ENCODE measurements at regions of chr16 and their contacts with region 1.

Region 1: GRCh38 chr16:66167564-66168291 is 198.8 kb upstream of the CDH5 start:
- DNase-seq: peak in 1 of 2 experiments; percentile 40
- H3K4me3 ChIP-seq: no peak overlapping the region
- H3K4me3 Mint-ChIP-seq: no peak overlapping the region
- H3K27ac Mint-ChIP-seq: no peak overlapping the region
- H3K4me1 ChIP-seq: peaks cover 7% of the 10 kb centered on the region; the same call in 1 of the 2 replicates
- H3K4me1 Mint-ChIP-seq: peaks cover 5% of the 10 kb centered on the region
- H3K27me3 ChIP-seq: no peaks in the 10 kb centered on the region
- H3K27me3 Mint-ChIP-seq: no peaks in the 10 kb centered on the region
- CTCF ChIP-seq: peak; percentile 20 to 40

Region 2: DNA sequence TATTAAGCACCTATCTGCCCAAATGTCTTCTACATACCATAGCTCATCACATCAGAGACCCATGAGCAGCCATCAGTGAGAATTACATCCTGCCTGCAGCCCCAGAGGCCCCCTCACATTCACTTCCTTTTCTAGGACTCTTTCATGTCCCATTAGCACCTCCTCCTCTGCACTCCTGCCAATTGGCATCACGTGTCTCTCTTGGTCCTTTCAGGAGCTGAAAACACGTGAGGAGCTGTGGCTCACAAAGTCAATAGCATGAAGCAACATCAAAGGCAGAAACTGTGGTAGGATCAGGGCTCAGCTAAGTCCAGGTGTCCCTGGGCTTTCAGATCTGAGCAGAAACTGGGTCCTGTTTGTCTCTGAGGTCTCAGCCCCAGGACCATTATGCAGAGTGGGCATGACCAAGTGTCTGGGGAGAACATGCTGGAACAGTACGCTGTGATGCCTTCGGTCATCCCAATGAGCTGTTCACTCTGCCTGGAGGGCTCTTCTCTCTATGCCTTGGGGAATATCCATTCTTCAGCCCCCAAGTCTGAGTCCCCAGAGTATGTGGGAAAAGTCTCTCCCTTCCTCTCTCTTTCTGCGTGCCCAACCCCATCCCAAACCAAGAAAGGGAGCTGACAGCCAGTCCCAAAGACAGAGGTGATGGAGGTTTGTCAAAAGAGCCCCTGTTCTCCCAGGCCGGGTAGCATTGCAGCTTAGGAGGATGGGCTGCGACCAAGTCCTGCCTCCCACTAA is 258.2 kb before region 1 on chr16:
- CTCF ChIA-PET with region 1: no interaction called
- POLR2A ChIA-PET with region 1: no interaction called
- intact Hi-C with region 1: loop called (anchors 5 kb)
- DNase-seq: no peak
- H3K4me3 ChIP-seq: no peak overlapping the region
- H3K4me3 Mint-ChIP-seq: no peak overlapping the region
- H3K27ac Mint-ChIP-seq: no peak overlapping the region
- H3K4me1 ChIP-seq: no peaks in the 10 kb centered on the region
- H3K4me1 Mint-ChIP-seq: no peaks in the 10 kb centered on the region
- H3K27me3 ChIP-seq: no peaks in the 10 kb centered on the region
- H3K27me3 Mint-ChIP-seq: peaks cover 18% of the 10 kb centered on the region
- CTCF ChIP-seq: no peak

Region 3: DNA sequence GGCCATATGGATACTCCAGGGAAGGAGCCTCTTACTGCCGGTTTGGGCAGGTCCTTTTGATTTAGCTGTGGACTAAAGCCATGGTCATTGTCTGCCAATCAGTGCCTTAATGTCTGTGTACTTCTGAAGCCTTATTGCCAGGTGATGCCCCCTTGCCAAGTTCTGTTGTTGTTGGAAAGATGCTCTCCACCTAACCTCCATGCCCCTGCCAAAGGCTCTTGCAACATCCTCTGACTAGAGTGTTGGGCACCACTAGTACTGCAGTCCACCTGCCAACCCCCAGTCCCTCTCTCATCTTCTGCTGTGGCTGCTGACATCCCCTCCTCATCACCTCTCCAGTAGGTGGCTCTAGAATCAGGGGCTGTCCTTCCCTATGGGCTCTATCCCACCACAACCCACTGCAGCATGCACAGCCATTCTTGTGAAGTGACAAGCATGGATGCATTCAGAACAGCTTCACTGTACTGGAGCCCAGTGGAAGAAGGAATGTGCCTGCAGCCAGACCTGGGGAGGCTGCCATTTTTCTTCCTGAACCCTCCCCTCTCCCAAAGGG is 176.5 kb before region 1 on chr16:
- CTCF ChIA-PET with region 1: no interaction called
- POLR2A ChIA-PET with region 1: no interaction called
- intact Hi-C with region 1: loop called (anchors 10 kb)
- DNase-seq: peak in 1 of 2 experiments; percentile 35
- H3K4me3 ChIP-seq: no peak overlapping the region
- H3K4me3 Mint-ChIP-seq: no peak overlapping the region
- H3K27ac Mint-ChIP-seq: no peak overlapping the region
- H3K4me1 ChIP-seq: no peaks in the 10 kb centered on the region
- H3K4me1 Mint-ChIP-seq: no peaks in the 10 kb centered on the region
- H3K27me3 ChIP-seq: no peaks in the 10 kb centered on the region
- H3K27me3 Mint-ChIP-seq: peaks cover 20% of the 10 kb centered on the region
- CTCF ChIP-seq: peak in 1 of 2 experiments; percentile 20

Region 4: GRCh38 chr16:66193543-66194229 is 26.0 kb after region 1 on chr16:
- CTCF ChIA-PET with region 1: no interaction called
- POLR2A ChIA-PET with region 1: no interaction called
- intact Hi-C with region 1: loop called (anchors 1 kb)
- DNase-seq: no peak
- H3K4me3 ChIP-seq: no peak overlapping the region
- H3K4me3 Mint-ChIP-seq: no peak overlapping the region
- H3K27ac Mint-ChIP-seq: no peak overlapping the region
- H3K4me1 ChIP-seq: no peaks in the 10 kb centered on the region
- H3K4me1 Mint-ChIP-seq: no peaks in the 10 kb centered on the region
- H3K27me3 ChIP-seq: no peaks in the 10 kb centered on the region
- H3K27me3 Mint-ChIP-seq: peaks cover 15% of the 10 kb centered on the region
- CTCF ChIP-seq: no peak

Region 5: DNA sequence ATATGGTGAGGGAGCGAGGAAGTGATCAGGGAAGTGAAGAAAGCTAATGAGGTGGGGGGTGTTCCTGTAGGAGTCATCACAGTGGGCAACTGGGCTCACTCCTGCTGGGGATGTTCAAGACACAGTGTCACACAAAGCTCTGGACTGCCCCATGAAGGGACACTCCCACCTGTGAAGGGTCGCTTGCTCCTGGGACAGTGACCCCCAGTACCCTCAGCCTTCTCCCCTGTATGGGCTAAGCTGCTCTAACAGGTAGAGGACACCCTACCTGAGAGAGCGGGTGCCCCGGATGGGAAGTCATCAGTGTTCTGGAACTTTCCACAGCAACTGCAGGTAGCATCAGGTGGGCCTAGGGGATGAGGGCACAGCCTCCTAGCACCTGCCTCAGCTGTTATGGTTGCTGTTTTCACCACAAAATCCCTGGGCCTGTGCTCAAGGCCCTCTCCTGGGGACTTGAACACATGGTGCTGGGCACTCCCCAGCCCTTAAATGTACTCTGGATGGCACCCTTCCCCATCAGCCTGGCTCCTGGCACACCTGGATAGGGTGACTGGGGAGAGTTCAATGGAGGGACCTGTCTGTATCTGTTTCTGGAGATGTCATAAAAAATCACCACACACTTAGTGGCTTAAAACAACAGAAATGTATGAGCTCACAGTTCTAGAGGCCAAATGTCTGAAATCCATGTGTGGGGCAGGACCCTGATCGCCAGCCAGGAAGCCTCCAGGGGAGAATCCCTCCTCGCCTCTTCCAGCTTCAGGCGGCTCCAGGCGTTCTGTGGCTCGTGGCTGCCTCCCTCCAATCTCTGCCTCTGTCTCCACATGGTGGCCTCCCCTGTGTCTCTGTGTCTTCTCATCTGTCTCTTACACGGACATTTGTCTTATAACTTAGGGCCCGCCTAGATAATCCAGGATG is 94.8 kb after region 1 on chr16:
- CTCF ChIA-PET with region 1: no interaction called
- POLR2A ChIA-PET with region 1: no interaction called
- intact Hi-C with region 1: no loop called
- DNase-seq: no peak
- H3K4me3 ChIP-seq: no peak overlapping the region
- H3K4me3 Mint-ChIP-seq: no peak overlapping the region
- H3K27ac Mint-ChIP-seq: no peak overlapping the region
- H3K4me1 ChIP-seq: peaks cover 18% of the 10 kb centered on the region
- H3K4me1 Mint-ChIP-seq: no peaks in the 10 kb centered on the region
- H3K27me3 ChIP-seq: no peaks in the 10 kb centered on the region
- H3K27me3 Mint-ChIP-seq: no peaks in the 10 kb centered on the region
- CTCF ChIP-seq: no peak

Region 6: GRCh38 chr16:67146523-67147357 is 979.0 kb after region 1 on chr16:
- CTCF ChIA-PET with region 1: no interaction called
- POLR2A ChIA-PET with region 1: no interaction called
- intact Hi-C with region 1: no loop called
- DNase-seq: no peak
- H3K4me3 ChIP-seq: no peak overlapping the region
- H3K4me3 Mint-ChIP-seq: no peak overlapping the region
- H3K27ac Mint-ChIP-seq: no peak overlapping the region
- H3K4me1 ChIP-seq: no peaks in the 10 kb centered on the region; the same call in none of the 2 replicates
- H3K4me1 Mint-ChIP-seq: no peaks in the 10 kb centered on the region
- H3K27me3 ChIP-seq: no peaks in the 10 kb centered on the region
- H3K27me3 Mint-ChIP-seq: no peaks in the 10 kb centered on the region
- CTCF ChIP-seq: no peak

Measured in Caco-2 (cell line).